CD8-positive, alpha-beta T cell (primary cell): ENCODE measurements at regions of chr6 and their contacts with region 1.

Region 1: GRCh38 chr6:19999319-20000191 is 162.4 kb downstream of the ID4 start:
- DNase-seq: peak in 2 of 9 experiments; percentile 2 to 11
- ATAC-seq: no peak
- H3K4me3 ChIP-seq: no peak overlapping the region
- H3K4me3 Mint-ChIP-seq: no peak overlapping the region
- H3K27ac ChIP-seq: no peak overlapping the region
- H3K27ac Mint-ChIP-seq: no peak overlapping the region
- H3K4me1 ChIP-seq: no peaks in the 10 kb centered on the region
- H3K4me1 Mint-ChIP-seq: no peaks in the 10 kb centered on the region
- H3K27me3 ChIP-seq: no peaks in the 10 kb centered on the region
- H3K27me3 Mint-ChIP-seq: peaks cover 3% of the 10 kb centered on the region
- CTCF ChIP-seq: no peak

Region 2: DNA sequence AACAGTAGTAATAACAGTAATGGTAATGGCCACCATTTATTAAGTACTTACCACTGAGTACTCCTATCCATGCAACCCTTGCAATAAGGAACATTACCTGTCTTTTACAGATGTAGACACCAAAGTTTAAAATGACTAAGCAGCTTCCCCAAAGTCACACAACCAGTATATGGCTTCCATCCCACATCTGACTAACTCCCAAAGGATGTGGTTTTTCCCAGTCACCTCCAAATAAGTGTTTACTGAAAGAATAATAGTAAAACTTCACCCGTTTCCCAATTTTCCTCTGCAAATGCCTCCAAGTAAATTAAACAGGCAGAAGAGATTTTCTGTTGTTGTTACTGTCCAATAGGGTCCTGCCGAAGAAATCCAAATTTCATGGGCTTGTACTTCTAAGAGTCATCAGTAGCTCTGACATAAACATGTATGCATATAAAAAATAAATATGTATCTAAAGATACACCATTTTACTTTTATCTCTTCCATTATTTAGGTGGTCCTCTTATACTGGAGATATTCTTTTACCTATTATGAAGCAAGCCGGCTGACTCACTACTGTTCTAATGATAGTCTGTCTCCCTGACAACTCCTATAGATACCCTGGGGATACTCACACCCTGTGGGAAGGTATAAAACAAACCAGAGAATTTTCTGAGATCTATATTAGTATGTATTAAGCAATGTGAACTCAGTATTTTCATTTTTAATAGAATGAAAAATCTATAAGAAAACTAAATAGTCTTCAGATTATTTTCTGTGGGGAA is 240.3 kb before region 1 on chr6:
- CTCF ChIA-PET with region 1: no interaction called
- POLR2A ChIA-PET with region 1: no interaction called
- intact Hi-C with region 1: no loop called
- DNase-seq: no peak
- ATAC-seq: no peak
- H3K4me3 ChIP-seq: no peak overlapping the region
- H3K4me3 Mint-ChIP-seq: no peak overlapping the region
- H3K27ac ChIP-seq: no peak overlapping the region
- H3K27ac Mint-ChIP-seq: no peak overlapping the region
- H3K4me1 ChIP-seq: no peaks in the 10 kb centered on the region
- H3K4me1 Mint-ChIP-seq: no peaks in the 10 kb centered on the region
- H3K27me3 ChIP-seq: no peaks in the 10 kb centered on the region
- H3K27me3 Mint-ChIP-seq: no peaks in the 10 kb centered on the region
- CTCF ChIP-seq: no peak

Region 3: DNA sequence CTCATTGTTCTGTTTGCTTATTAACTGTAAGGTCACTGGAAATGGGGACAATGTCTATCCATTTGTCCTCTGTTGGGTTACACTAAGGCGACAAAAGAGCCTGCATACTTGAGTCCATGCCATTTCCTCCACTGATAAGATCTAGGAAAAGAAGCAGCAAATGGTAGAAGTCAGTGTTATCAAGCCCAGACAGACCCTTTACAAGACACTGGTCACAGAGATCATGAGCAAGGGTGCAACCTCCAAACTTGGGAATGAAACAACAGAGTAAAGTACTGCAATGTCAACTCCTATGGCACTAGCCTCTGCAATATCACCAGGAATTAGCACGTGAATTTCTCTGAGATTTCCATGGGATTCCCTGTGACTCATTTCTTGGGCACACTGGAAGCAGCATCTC is 35.4 kb before region 1 on chr6:
- CTCF ChIA-PET with region 1: no interaction called
- POLR2A ChIA-PET with region 1: no interaction called
- intact Hi-C with region 1: loop called in 1 of 2 experiments (anchors 1 kb)
- DNase-seq: no peak
- ATAC-seq: no peak
- H3K4me3 ChIP-seq: no peak overlapping the region
- H3K4me3 Mint-ChIP-seq: no peak overlapping the region
- H3K27ac ChIP-seq: no peak overlapping the region
- H3K27ac Mint-ChIP-seq: no peak overlapping the region
- H3K4me1 ChIP-seq: no peaks in the 10 kb centered on the region
- H3K4me1 Mint-ChIP-seq: no peaks in the 10 kb centered on the region
- H3K27me3 ChIP-seq: peaks cover 0 to 2% of the 10 kb centered on the region in 2 experiments
- H3K27me3 Mint-ChIP-seq: peaks cover 3% of the 10 kb centered on the region
- CTCF ChIP-seq: no peak

Region 4: DNA sequence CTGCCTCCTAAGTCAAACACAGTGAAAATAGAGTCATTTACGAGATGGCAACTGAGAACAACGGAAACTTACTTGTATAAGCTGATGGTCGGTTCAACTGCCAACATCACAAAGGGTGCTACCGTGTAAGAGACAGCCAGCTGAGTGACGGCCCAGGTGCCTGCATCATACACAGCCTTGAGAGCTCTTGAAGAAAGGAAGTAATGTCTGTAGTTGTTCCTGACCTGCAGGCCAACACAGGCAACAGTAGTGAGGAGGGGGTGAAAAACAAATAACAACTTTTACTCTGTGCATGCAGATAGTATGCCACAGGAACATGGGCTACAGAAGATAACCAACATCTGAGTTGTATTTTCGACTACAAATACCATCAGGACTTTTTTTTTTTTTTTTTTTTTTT is 110.0 kb after region 1 on chr6:
- CTCF ChIA-PET with region 1: no interaction called
- POLR2A ChIA-PET with region 1: no interaction called
- intact Hi-C with region 1: no loop called
- DNase-seq: no peak
- ATAC-seq: no peak
- H3K4me3 ChIP-seq: no peak overlapping the region
- H3K4me3 Mint-ChIP-seq: no peak overlapping the region
- H3K27ac ChIP-seq: no peak overlapping the region
- H3K27ac Mint-ChIP-seq: no peak overlapping the region
- H3K4me1 ChIP-seq: no peaks in the 10 kb centered on the region
- H3K4me1 Mint-ChIP-seq: no peaks in the 10 kb centered on the region
- H3K27me3 ChIP-seq: no peaks in the 10 kb centered on the region
- H3K27me3 Mint-ChIP-seq: no peaks in the 10 kb centered on the region
- CTCF ChIP-seq: no peak

Region 5: GRCh38 chr6:20197251-20197650 is 197.7 kb after region 1 on chr6:
- CTCF ChIA-PET with region 1: no interaction called
- POLR2A ChIA-PET with region 1: no interaction called
- intact Hi-C with region 1: no loop called
- DNase-seq: no peak
- ATAC-seq: no peak
- H3K4me3 ChIP-seq: no peak overlapping the region
- H3K4me3 Mint-ChIP-seq: no peak overlapping the region
- H3K27ac ChIP-seq: no peak overlapping the region
- H3K27ac Mint-ChIP-seq: no peak overlapping the region
- H3K4me1 ChIP-seq: no peaks in the 10 kb centered on the region
- H3K4me1 Mint-ChIP-seq: peaks cover 2% of the 10 kb centered on the region
- H3K27me3 ChIP-seq: no peaks in the 10 kb centered on the region
- H3K27me3 Mint-ChIP-seq: no peaks in the 10 kb centered on the region
- CTCF ChIP-seq: no peak